ENCODE measurements at regions of chr3 and their contacts with region 1.

Region 1: DNA sequence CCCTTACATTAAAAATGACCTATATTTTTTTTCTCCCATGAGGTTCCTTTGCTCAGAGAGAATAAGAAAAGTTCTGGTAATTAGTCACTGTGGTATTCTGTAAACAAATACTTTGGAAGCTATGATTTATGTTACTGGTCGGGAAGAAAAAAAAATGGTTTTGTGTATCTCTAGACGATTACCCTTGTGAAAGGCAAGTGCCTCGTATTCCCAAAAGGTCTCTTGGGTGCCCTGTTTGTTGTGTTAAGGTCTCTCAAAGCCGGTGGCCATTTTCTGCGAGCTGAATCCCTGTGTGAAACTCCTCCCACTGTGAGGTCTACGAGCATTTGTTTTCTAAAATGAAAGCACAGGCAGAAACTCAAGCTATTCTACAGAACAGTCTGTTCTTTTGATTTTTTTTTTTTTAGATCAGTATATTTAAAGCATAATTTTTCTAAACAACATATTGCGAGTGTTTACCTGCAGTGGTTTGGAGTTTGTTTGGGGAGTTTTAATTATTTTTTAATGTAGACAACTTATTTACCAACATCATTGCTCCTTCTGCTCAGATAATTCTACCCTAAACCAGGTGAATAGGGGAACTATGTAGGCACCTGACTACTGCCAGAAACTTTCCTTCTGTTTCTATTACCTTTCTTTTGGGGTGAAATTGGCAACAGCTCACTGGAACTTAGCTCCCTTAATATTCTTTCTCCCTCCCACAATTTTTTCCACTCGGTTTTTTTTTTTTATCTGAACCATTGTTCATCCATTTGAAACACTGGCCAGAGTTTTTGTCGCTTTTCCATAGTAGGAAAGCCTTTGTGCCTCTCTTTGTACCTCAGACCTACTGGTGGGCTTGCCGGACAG is 44.0 kb downstream of the ZBTB38 start:
- DNase-seq: peak in 1 of 2 donors; percentile 84
- H3K4me3 ChIP-seq: peak overlapping the region; percentile 43 to 54
- H3K27ac ChIP-seq: peak overlapping the region; percentile 92 to 99
- H3K4me1 ChIP-seq: peaks cover 12 to 72% of the 10 kb centered on the region in 2 donors
- H3K27me3 ChIP-seq: no peaks in the 10 kb centered on the region
- CTCF ChIP-seq: no peak

Region 2: DNA sequence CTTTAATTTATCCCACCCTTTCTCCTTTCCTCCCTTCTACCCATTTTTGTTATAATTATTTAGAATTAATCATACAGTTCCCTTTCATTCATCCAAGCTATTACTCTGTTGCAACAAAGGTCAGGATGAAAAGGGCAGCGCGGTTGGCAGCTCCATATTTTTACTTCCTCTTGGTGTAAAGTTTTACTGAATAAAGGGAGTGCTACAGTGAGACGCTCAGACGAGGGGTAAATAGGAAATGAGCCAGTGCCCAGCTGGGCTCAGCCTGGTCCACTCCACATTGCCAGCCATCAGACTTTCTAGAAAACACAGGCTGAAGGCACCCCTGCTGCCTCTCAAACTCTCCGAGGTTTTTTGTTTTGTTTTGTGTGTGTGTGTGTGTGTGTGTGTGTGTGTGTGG is 65.9 kb before region 1 on chr3:
- intact Hi-C with region 1: no loop called
- DNase-seq: no peak
- H3K4me3 ChIP-seq: no peak overlapping the region
- H3K27ac ChIP-seq: no peak overlapping the region
- H3K4me1 ChIP-seq: no peaks in the 10 kb centered on the region
- H3K27me3 ChIP-seq: no peaks in the 10 kb centered on the region
- CTCF ChIP-seq: no peak

Region 3: GRCh38 chr3:141441381-141442364 is 29.4 kb after region 1 on chr3:
- intact Hi-C with region 1: loop called (anchors 2 kb)
- DNase-seq: no peak
- H3K4me3 ChIP-seq: peak overlapping the region in 1 of 2 donors; percentile 38
- H3K27ac ChIP-seq: peak overlapping the region; percentile 72 to 80
- H3K4me1 ChIP-seq: peaks cover 0 to 22% of the 10 kb centered on the region in 2 donors
- H3K27me3 ChIP-seq: no peaks in the 10 kb centered on the region
- CTCF ChIP-seq: peak; percentile 37 to 52 (median 51)